ENCODE measurements at regions of chr10 and their contacts with region 1.

Region 1: GRCh38 chr10:110497438-110498086 is at the start of gene DUSP5:
- DNase-seq: peak; percentile 94 to 98 (median 95)
- ATAC-seq: peak; percentile 62 to 90 (median 80)
- H3K4me3 ChIP-seq: peak within 1 kb of the TSS; percentile 51 to 97 (median 83)
- H3K27ac ChIP-seq: peak within 1 kb of the TSS; percentile 78 to 98 (median 94)
- H3K4me1 ChIP-seq: peaks cover 10 to 61% (median 36%) of the 10 kb centered on the region in 12 donors
- H3K27me3 ChIP-seq: no peaks in the 10 kb centered on the region
- CTCF ChIP-seq: peak in 1 of 12 donors; percentile 6
- POLR2A ChIP-seq: peak; percentile 96 to 99
- total RNA-seq, gene DUSP5: 5.5 to 36.4 (median 16.1) TPM

Region 2: DNA sequence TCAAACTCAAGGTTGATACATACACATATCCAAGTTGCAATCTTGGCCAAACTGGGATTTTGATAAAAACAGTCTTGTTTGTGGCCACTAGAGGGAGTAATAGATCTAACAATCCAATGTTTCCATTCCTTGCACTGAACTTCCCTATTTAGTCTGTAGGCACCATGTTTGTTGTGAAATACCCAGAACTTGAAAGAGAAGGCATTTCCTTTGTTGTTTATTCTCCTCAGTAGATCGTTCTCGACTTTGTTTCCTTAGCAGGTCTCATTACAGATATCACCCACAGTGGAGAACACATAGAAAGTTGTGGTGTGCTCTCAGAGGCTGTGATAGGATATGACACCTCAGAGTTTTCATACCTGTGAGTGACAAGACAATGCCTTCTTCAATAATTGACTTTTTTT is 360.4 kb before region 1 on chr10:
- intact Hi-C with region 1: loop called in 1 of 10 experiments (anchors 5 kb)
- DNase-seq: no peak
- ATAC-seq: peak; percentile 58 to 79 (median 78)
- H3K4me3 ChIP-seq: peak overlapping the region in 1 of 12 donors; percentile 33
- H3K27ac ChIP-seq: peak overlapping the region in 8 of 12 donors; percentile 10 to 84 (median 42)
- H3K4me1 ChIP-seq: peaks cover 4 to 43% (median 19%) of the 10 kb centered on the region in 12 donors
- H3K27me3 ChIP-seq: no peaks in the 10 kb centered on the region
- CTCF ChIP-seq: peak; percentile 67 to 90 (median 82)
- POLR2A ChIP-seq: no peak

Region 3: GRCh38 chr10:110225756-110226542 is 271.6 kb before region 1 on chr10:
- intact Hi-C with region 1: loop called in 1 of 10 experiments (anchors 10 kb)
- DNase-seq: peak; percentile 92 to 95 (median 95)
- ATAC-seq: peak; percentile 55 to 78 (median 70)
- H3K4me3 ChIP-seq: peak overlapping the region; percentile 50 to 93 (median 87)
- H3K27ac ChIP-seq: peak overlapping the region; percentile 76 to 96 (median 88)
- H3K4me1 ChIP-seq: peaks cover 12 to 61% (median 39%) of the 10 kb centered on the region in 12 donors
- H3K27me3 ChIP-seq: no peaks in the 10 kb centered on the region
- CTCF ChIP-seq: peak; percentile 55 to 91 (median 72)
- POLR2A ChIP-seq: peak in 1 of 2 donors; percentile 39

Region 4: DNA sequence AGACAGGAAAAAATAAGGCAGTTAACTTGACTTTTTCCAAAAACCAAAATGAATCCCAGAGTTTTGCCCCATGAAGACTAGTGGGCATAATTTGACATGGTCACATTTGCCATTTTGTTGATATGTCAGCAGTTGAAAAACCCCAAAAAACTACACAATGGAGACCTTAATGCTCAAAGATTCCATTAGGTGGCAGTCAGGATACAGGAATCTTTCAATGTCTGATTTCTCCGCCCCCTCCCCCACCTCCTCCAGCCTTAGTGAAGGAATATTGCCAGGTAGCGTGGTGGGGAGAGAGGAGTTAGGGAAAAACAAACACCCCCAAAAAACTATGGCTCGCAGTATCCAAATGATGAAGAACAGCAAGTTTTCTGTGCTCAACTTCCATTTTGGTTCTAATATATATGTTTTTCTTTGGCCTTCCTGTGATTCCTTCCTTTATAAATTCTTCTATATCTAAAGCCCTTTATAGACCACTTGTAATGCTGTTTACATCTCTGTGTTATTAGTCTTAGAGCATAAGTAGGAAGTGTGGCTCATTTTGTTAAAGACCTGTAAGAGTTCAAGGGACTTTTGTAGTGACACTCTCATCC is 186.1 kb before region 1 on chr10:
- intact Hi-C with region 1: loop called in 5 of 10 experiments (anchors 2 to 5 kb)
- DNase-seq: peak in 3 of 5 donors; percentile 32 to 56 (median 43)
- ATAC-seq: peak in 3 of 4 donors; percentile 64 to 85 (median 79)
- H3K4me3 ChIP-seq: no peak overlapping the region
- H3K27ac ChIP-seq: peak overlapping the region in 1 of 12 donors; percentile 38
- H3K4me1 ChIP-seq: peaks cover 0 to 9% (median 4%) of the 10 kb centered on the region in 12 donors
- H3K27me3 ChIP-seq: peaks cover 0 to 6% (median 0%) of the 10 kb centered on the region in 9 donors
- CTCF ChIP-seq: peak; percentile 39 to 78 (median 68)
- POLR2A ChIP-seq: no peak

Region 5: GRCh38 chr10:110395725-110396651 is 101.6 kb before region 1 on chr10:
- intact Hi-C with region 1: no loop called
- DNase-seq: peak in 1 of 5 donors; percentile 39
- ATAC-seq: peak; percentile 16 to 83 (median 62)
- H3K4me3 ChIP-seq: no peak overlapping the region
- H3K27ac ChIP-seq: peak overlapping the region in 3 of 12 donors; percentile 39 to 55 (median 55)
- H3K4me1 ChIP-seq: peaks cover 0 to 42% (median 9%) of the 10 kb centered on the region in 12 donors
- H3K27me3 ChIP-seq: no peaks in the 10 kb centered on the region
- CTCF ChIP-seq: no peak
- POLR2A ChIP-seq: no peak

Region 6: GRCh38 chr10:110460111-110460809 is 37.3 kb before region 1 on chr10:
- intact Hi-C with region 1: loop called in 1 of 10 experiments (anchors 5 kb)
- DNase-seq: peak in 3 of 5 donors; percentile 35 to 49 (median 36)
- ATAC-seq: peak; percentile 20 to 53 (median 33)
- H3K4me3 ChIP-seq: no peak overlapping the region
- H3K27ac ChIP-seq: peak overlapping the region in 5 of 12 donors; percentile 10 to 77 (median 40)
- H3K4me1 ChIP-seq: peaks cover 0 to 47% (median 14%) of the 10 kb centered on the region in 12 donors
- H3K27me3 ChIP-seq: no peaks in the 10 kb centered on the region
- CTCF ChIP-seq: no peak
- POLR2A ChIP-seq: no peak

Region 7: GRCh38 chr10:110547139-110547761 is 49.7 kb after region 1 on chr10:
- intact Hi-C with region 1: loop called in 5 of 10 experiments (anchors 2 to 5 kb)
- DNase-seq: no peak
- ATAC-seq: peak; percentile 32 to 63 (median 54)
- H3K4me3 ChIP-seq: no peak overlapping the region
- H3K27ac ChIP-seq: peak overlapping the region in 1 of 12 donors; percentile 75
- H3K4me1 ChIP-seq: peaks cover 0 to 12% (median 1%) of the 10 kb centered on the region in 12 donors
- H3K27me3 ChIP-seq: peaks cover 0 to 8% (median 0%) of the 10 kb centered on the region in 9 donors
- CTCF ChIP-seq: peak; percentile 69 to 88 (median 81)
- POLR2A ChIP-seq: no peak

Region 8: DNA sequence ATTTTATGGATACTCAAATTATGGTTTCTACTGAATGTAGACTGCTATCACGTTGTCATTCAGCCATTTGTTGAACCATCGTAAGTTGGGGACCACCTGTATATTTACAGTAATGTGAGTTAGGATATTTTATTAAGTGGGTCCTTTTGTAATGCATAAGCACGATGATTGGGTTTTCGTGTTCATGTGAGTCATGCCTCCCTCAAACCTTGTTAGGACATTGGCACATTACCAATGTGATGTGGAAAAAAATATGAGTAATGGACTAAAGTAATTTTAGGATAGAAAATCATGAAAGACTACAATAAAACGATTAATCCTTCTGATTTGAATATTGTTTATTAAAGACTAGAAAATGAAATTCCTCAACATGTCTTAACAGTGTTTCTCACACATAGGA is 78.7 kb after region 1 on chr10:
- intact Hi-C with region 1: no loop called
- DNase-seq: no peak
- ATAC-seq: no peak
- H3K4me3 ChIP-seq: no peak overlapping the region
- H3K27ac ChIP-seq: no peak overlapping the region
- H3K4me1 ChIP-seq: peaks cover 0 to 33% (median 14%) of the 10 kb centered on the region in 12 donors
- H3K27me3 ChIP-seq: no peaks in the 10 kb centered on the region
- CTCF ChIP-seq: no peak
- POLR2A ChIP-seq: no peak

Region 9: GRCh38 chr10:110774069-110775019 is 276.8 kb after region 1 on chr10:
- intact Hi-C with region 1: no loop called
- DNase-seq: no peak
- ATAC-seq: peak in 3 of 4 donors; percentile 13 to 48 (median 31)
- H3K4me3 ChIP-seq: no peak overlapping the region
- H3K27ac ChIP-seq: peak overlapping the region; percentile 20 to 83 (median 58)
- H3K4me1 ChIP-seq: peaks cover 0 to 80% (median 29%) of the 10 kb centered on the region in 12 donors
- H3K27me3 ChIP-seq: no peaks in the 10 kb centered on the region
- CTCF ChIP-seq: no peak
- POLR2A ChIP-seq: no peak

Region 10: GRCh38 chr10:110820321-110820814 is 322.8 kb after region 1 on chr10:
- intact Hi-C with region 1: no loop called
- DNase-seq: peak in 4 of 5 donors; percentile 77 to 80 (median 79)
- ATAC-seq: peak; percentile 53 to 78 (median 64)
- H3K4me3 ChIP-seq: no peak overlapping the region
- H3K27ac ChIP-seq: peak overlapping the region; percentile 61 to 91 (median 80)
- H3K4me1 ChIP-seq: peaks cover 3 to 94% (median 52%) of the 10 kb centered on the region in 12 donors
- H3K27me3 ChIP-seq: no peaks in the 10 kb centered on the region
- CTCF ChIP-seq: no peak
- POLR2A ChIP-seq: no peak